ENCODE measurements at regions of chr7 and their contacts with region 1.

Region 1: DNA sequence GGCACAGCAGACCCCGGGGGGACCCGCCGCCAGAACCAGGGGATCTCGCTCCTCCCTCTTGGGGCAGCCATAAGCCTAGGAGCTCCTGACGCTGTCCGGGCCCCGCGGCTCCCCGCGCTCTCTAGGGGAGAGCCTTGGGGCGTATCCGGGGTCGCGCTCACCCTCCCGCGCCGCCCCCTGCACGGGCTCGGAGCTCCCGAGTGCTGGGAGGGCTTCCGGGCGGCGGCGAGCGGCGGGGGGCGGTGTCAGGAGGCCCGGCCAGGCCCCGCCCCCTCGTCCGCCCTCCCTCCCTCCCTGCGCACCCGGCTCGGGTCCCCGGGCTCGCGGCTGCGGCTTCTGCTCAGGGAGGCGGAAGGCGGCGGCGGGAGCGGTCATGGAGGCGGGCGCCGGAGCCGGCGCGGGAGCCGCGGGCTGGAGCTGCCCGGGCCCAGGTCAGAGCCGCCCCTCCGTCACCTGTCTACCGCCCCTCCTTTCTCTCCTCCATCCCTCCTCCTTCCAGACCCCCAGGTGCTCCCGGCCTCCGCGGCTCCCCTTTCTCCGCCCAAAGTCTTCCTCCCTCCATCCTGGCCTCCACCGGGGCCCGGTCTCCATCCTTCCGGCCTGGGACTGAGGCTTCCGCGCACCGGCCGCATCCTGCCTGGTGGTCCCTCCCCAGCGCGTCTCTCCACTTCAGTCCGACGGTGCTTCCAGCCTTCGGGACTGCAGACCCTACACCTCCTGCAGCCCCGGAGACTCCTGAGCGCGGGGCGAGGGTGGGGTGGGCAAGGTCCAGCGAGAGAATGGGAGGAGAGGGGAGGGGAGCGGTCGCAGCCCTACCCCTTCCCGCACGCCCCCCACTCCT is 427 bp upstream of the CCDC136 start:
- DNase-seq: no peak
- ATAC-seq: peak; percentile 89
- H3K4me3 ChIP-seq: peak overlapping the region; percentile 63 to 65
- H3K27ac ChIP-seq: no peak overlapping the region
- H3K4me1 ChIP-seq: no peaks in the 10 kb centered on the region; the same call in 1 of the 2 replicates
- H3K27me3 ChIP-seq: peaks cover 14% of the 10 kb centered on the region
- CTCF ChIP-seq: no peak

Region 2: GRCh38 chr7:128869138-128869943 is 78.0 kb after region 1 on chr7:
- CTCF ChIA-PET with region 1: no interaction called
- POLR2A ChIA-PET with region 1: no interaction called
- in situ Hi-C with region 1: no loop called
- intact Hi-C with region 1: loop called (anchors 5 kb)
- DNase-seq: no peak
- ATAC-seq: peak; percentile 82
- H3K4me3 ChIP-seq: peak overlapping the region; percentile 45 to 53
- H3K27ac ChIP-seq: no peak overlapping the region
- H3K4me1 ChIP-seq: 0 out of 2 replicates have a peak, but pooled peaks cover 3% of the 10 kb centered on the region
- H3K27me3 ChIP-seq: no peaks in the 10 kb centered on the region; the same call in 1 of the 2 replicates
- CTCF ChIP-seq: peak; percentile 52

Region 3: DNA sequence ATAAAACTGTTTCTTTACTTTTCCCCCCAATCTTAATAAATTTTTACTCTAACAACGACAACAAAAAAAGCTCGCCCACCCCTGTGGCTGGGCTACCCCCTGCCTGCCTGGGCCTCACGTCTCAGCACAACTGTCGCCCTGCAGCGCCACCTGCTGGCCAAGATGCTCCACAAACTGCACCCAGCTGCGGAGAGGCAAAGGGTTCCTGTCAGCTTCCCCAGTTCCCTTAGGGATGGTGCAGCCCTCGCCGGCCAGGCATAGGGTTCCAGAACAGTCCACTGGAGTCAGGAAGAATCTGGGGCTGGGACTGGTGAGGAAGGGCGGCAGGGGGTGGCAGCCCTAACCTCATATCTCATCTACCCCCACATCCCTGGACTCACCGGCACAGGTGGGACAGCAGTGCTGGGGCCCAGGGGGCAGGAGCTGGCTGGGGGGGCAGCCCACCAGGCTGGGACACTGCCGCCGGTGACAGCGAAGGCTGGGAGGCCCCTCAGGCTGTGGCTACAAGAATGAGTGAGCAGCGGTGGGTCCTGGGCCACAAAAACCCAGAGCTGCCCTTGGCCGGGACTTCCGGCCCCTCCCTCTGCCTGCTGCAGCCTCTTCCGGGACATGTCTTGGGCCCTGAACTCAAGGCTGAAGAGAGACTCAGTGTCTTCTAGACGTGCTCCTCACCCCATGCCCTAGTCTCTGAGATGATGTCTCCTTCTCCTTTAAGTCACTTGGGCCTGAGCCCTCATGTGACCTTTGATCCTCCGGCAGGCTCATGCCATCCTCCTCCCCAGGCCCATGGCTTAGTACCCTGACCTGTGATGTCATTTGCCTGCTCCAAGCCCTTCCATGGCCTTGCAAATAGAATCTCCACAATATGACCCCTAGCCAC is 92.5 kb after region 1 on chr7:
- CTCF ChIA-PET with region 1: interaction called, 5 read pairs
- POLR2A ChIA-PET with region 1: interaction called, 3 read pairs
- in situ Hi-C with region 1: no loop called
- intact Hi-C with region 1: loop called (anchors 5 kb)
- DNase-seq: peak; percentile 52
- ATAC-seq: peak; percentile 75
- H3K4me3 ChIP-seq: no peak overlapping the region
- H3K27ac ChIP-seq: no peak overlapping the region
- H3K4me1 ChIP-seq: no peaks in the 10 kb centered on the region
- H3K27me3 ChIP-seq: no peaks in the 10 kb centered on the region
- CTCF ChIP-seq: peak; percentile 97

Region 4: DNA sequence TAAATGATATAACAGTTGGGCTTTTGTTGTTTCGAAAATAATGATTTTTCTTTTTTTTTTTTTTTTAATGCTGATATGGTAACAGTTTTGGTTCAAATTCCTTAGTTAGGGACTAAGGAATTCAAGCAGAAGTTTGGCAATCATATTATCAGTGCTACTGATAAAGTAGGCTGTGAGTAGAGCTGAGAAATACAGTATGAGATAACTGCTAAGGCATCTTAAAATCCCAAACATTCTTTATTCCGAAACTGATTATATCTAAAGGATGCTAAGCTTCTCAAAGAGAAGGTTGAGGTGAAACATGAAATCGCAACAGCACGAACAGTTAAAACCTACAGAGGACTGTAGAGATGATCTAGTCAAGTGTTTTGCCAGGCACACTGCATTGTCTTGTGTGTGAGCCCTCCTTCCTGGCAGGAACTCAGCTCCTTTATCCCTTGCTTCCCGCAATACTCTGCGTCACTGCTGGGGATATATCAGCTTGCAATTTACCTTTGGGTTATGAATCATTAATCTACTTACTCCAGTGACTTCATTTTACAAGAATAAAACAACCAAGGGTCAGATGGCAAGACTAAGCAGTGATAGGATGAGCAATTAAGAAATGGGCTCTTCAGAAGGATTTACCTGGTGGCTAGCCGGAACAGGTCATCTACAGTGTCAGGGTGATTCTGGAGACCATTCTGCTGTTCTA is 183.0 kb after region 1 on chr7:
- CTCF ChIA-PET with region 1: no interaction called
- POLR2A ChIA-PET with region 1: no interaction called
- in situ Hi-C with region 1: no loop called
- intact Hi-C with region 1: no loop called
- DNase-seq: no peak
- ATAC-seq: no peak
- H3K4me3 ChIP-seq: no peak overlapping the region
- H3K27ac ChIP-seq: no peak overlapping the region
- H3K4me1 ChIP-seq: no peaks in the 10 kb centered on the region
- H3K27me3 ChIP-seq: no peaks in the 10 kb centered on the region
- CTCF ChIP-seq: no peak